ENCODE measurements at regions of chrX and their contacts with region 1.

Region 1: DNA sequence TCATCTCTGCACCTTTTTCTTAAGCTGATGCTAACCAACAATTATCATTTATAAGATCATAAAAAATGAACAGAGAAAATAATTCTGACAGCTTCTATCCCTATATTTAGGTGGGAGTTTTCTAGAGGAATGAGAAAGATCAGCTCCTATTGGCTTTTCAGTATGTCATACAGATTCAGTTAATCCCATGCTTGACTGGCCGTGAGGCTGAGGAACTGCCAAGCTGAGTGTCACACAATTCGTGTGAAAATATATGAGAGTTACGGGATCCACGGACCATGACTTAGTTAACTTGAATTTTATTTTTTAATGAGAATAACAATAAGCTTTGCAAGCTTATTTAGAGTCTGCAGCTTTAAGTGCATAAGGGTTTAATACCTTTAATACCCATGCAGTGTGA is 37.5 kb downstream of the PHEX start:
- DNase-seq: no peak
- H3K4me3 ChIP-seq: no peak overlapping the region
- H3K27ac ChIP-seq: no peak overlapping the region
- H3K27me3 ChIP-seq: no peaks in the 10 kb centered on the region
- CTCF ChIP-seq: no peak

Region 2: DNA sequence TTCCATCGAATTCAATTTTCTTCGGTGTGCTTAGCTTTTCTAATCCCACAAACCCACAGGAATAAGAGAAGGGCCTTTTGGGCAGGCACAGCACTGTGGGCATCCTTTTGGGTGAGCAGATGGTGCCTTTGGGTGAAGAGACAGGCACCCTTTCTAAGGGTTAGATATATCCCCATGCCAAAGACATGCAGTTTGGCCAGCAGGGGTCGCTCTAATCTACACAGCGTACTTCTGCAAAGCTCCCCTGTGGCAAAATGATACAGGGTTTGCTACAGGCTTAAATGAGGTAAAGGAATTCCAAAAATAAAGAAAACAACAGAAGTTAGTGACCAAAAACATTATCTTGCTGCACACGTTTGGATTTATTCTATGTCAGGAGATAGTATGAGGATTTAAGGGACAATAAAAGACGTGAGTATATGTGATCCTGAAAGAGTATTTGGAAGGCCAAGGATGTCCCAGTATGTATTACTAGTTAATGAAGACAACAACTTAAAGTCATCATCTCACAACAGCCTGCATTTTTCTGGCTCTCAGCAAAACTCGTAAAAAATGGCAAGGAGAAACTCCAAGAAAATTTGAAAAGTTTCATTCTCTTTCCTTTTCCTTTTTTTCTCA is 12.0 kb after region 1 on chrX:
- CTCF ChIA-PET with region 1: interaction called, 24 read pairs
- POLR2A ChIA-PET with region 1: no interaction called
- DNase-seq: peak; percentile 20
- H3K4me3 ChIP-seq: no peak overlapping the region
- H3K27ac ChIP-seq: no peak overlapping the region
- H3K27me3 ChIP-seq: no peaks in the 10 kb centered on the region
- CTCF ChIP-seq: peak; percentile 71

Measured in AG04450 (cell line).